Activated CD4-positive, alpha-beta memory T cell treated with anti-CD3 and anti-CD28 coated beads for 36 hours (primary cell): ENCODE measurements at regions of chr17 and their contacts with region 1.

Region 1: GRCh38 chr17:39754161-39754951 is 16.6 kb downstream of the GRB7 start:
- DNase-seq: peak; percentile 98
- H3K4me3 Mint-ChIP-seq: peak overlapping the region; percentile 78
- H3K27ac Mint-ChIP-seq: peak overlapping the region; percentile 91
- H3K4me1 Mint-ChIP-seq: peaks cover 67% of the 10 kb centered on the region
- H3K27me3 Mint-ChIP-seq: no peaks in the 10 kb centered on the region

Region 2: DNA sequence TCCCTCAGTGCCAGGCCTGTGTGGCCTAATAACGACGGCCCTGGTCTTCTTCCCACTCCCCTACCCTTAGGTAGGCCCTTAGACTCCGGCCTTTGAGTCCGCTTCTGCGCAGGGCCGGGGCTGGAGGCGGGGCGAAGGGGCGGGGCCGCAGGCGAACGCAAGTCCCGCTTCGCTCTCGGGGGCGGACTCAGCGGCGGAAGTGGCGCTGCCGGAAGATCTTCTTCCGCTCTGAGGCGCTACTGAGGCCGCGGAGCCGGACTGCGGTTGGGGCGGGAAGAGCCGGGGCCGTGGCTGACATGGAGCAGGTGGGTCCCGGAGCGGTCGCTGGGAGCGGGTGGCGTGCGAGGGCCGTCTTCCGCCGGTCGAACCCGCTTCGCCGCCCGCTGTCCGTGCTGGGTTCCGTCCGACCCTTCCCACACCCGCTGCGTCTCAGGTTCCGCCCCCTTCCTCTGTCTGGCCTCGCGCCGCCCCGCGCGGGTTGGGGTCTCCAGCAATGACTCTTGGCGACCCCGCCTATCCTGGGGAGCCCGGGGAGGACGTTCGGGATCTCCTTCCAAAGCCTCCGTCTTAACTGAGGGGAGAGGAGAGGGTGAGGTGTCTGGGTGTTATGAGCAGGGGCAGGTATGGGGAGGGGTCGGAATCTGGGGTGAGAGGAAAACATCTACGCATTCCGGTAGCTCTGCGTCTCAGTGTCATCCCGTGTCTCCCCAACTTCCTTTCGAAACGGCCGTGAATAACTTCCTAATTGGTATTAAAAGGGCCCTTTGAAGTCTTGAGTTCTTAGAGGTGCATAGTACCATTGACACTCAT is 117.2 kb before region 1 on chr17 and contains the start of gene STARD3:
- CTCF ChIA-PET with region 1: interaction called, 3 read pairs
- POLR2A ChIA-PET with region 1: no interaction called
- intact Hi-C with region 1: loop called (anchors 5 kb)
- DNase-seq: peak; percentile 95
- H3K4me3 Mint-ChIP-seq: peak within 1 kb of the TSS; percentile 88
- H3K27ac Mint-ChIP-seq: peak within 1 kb of the TSS; percentile 83
- H3K4me1 Mint-ChIP-seq: peaks cover 51% of the 10 kb centered on the region
- H3K27me3 Mint-ChIP-seq: no peaks in the 10 kb centered on the region
- total RNA-seq, gene STARD3: 53.6 to 60.3 TPM

Region 3: GRCh38 chr17:39730095-39730921 is 24.0 kb before region 1 on chr17 and contains the start of gene MIEN1:
- CTCF ChIA-PET with region 1: interaction called, 14 read pairs
- POLR2A ChIA-PET with region 1: interaction called, 4 read pairs
- intact Hi-C with region 1: no loop called
- DNase-seq: peak; percentile 95
- H3K4me3 Mint-ChIP-seq: peak within 1 kb of the TSS; percentile 88
- H3K27ac Mint-ChIP-seq: peak within 1 kb of the TSS; percentile 73
- H3K4me1 Mint-ChIP-seq: peaks cover 12% of the 10 kb centered on the region
- H3K27me3 Mint-ChIP-seq: no peaks in the 10 kb centered on the region
- total RNA-seq, gene MIEN1: 41.0 to 43.8 TPM

Region 4: DNA sequence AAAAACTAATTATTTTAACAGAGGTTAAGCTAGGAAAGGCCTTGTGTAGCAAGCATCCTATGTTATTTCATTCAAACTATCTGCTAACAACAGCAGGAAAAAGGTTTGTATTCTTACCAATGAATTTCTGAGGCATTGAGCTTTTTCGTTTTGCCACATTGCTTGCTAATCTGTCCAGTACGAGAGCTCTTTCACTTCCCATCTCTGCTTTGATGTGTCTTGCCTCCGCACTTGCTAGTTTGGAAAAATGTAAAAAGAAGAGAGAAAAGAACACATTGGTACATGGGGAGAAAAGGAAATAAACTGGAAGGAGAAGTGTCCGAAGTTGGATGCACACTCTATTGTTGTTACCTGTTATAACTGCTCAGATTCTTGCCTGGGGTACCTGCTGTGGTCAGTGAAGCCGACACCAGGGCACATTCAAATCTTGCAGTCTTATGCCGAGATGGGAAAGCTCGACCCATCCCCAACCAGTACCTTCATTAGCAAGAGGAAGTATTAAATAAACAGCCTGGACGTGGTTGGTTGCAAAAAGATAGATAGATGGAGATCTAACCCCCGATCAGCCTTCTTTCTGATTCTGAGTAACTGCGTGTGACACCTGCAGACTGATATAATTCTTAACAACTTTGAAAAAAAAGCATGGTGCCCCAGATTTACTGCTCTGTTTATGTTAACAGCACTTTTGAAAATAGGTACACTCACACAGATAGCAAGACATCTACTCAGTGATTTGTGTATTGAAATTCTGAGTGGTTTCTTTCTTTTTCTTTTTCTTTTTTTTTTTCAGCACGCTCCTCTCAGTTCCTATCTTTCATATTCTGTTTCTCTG is 23.4 kb after region 1 on chr17:
- CTCF ChIA-PET with region 1: interaction called, 7 read pairs
- POLR2A ChIA-PET with region 1: interaction called, 28 read pairs
- intact Hi-C with region 1: no loop called
- DNase-seq: no peak
- H3K4me3 Mint-ChIP-seq: peak overlapping the region; percentile 80
- H3K27ac Mint-ChIP-seq: peak overlapping the region; percentile 88
- H3K4me1 Mint-ChIP-seq: peaks cover 84% of the 10 kb centered on the region
- H3K27me3 Mint-ChIP-seq: no peaks in the 10 kb centered on the region

Region 5: DNA sequence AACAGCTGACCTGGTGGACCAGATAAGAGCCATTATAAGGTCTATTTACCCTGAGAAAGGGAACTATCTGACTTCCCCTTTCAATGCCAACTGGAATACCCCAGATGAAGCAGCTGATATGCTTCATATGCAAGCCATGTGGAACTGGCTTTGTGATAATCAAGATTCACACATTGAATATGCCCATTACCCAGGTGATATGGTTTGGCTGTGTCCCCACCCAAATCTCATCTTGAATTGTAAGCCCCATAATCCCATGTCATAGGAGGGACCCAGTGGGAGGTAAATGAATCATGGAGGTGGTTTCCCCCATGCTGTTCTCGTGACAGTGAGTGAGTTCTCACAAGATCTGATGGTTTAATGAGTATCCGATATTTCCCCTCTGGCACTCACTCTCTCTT is 67.7 kb after region 1 on chr17:
- CTCF ChIA-PET with region 1: interaction called, 4 read pairs
- POLR2A ChIA-PET with region 1: interaction called, 4 read pairs
- intact Hi-C with region 1: loop called (anchors 1 kb)
- DNase-seq: peak; percentile 50
- H3K4me3 Mint-ChIP-seq: no peak overlapping the region
- H3K27ac Mint-ChIP-seq: peak overlapping the region; percentile 38
- H3K4me1 Mint-ChIP-seq: peaks cover 60% of the 10 kb centered on the region
- H3K27me3 Mint-ChIP-seq: no peaks in the 10 kb centered on the region

Region 6: DNA sequence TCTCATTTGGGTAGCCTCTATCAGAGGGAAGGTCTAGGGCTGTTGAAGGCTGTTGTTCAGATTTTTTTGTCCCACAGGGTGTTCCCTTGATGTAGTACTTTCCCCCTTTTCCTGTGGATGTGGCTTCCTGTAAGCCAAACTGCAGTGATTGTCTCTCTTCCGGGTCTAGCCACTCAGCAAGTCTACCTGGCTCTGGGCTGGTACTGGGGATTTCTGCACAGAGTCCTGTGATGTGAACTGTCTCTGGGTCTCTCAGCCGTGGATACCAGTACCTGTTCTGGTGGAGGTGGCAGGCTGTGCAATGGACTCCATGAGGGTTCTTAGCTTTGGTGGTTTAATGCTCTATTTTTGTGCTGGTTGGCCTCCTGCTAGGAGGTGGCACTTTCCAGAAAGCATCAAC is 834.2 kb after region 1 on chr17:
- CTCF ChIA-PET with region 1: no interaction called
- POLR2A ChIA-PET with region 1: no interaction called
- intact Hi-C with region 1: no loop called
- DNase-seq: no peak
- H3K4me3 Mint-ChIP-seq: no peak overlapping the region
- H3K27ac Mint-ChIP-seq: peak overlapping the region; percentile 15
- H3K4me1 Mint-ChIP-seq: peaks cover 61% of the 10 kb centered on the region
- H3K27me3 Mint-ChIP-seq: no peaks in the 10 kb centered on the region